Heart right ventricle (tissue), 16 donors: ENCODE measurements at regions of chr3 and their contacts with region 1.

Region 1: GRCh38 chr3:170419557-170420087 is 954 bp downstream of the CLDN11 start:
- DNase-seq: peak; percentile 19 to 20
- ATAC-seq: peak; percentile 43 to 72 (median 60)
- H3K4me3 ChIP-seq: peak overlapping the region; percentile 5 to 63 (median 48)
- H3K27ac ChIP-seq: peak overlapping the region in 7 of 10 donors; percentile 2 to 79 (median 54)
- H3K4me1 ChIP-seq: peaks cover 12 to 39% (median 28%) of the 10 kb centered on the region in 9 donors
- H3K27me3 ChIP-seq: peaks cover 0 to 53% (median 39%) of the 10 kb centered on the region in 7 donors
- CTCF ChIP-seq: no peak

Region 2: GRCh38 chr3:170499565-170500156 is 80.0 kb after region 1 on chr3:
- intact Hi-C with region 1: loop called in 1 of 10 experiments (anchors 10 kb)
- DNase-seq: peak in 1 of 2 donors; percentile 9
- ATAC-seq: no peak
- H3K4me3 ChIP-seq: no peak overlapping the region
- H3K27ac ChIP-seq: no peak overlapping the region
- H3K4me1 ChIP-seq: no peaks in the 10 kb centered on the region
- H3K27me3 ChIP-seq: no peaks in the 10 kb centered on the region
- CTCF ChIP-seq: peak in 7 of 9 donors; percentile 25 to 55 (median 42)